Ovary (tissue), 10 donors: ENCODE measurements at regions of chr12 and their contacts with region 1.

Region 1: GRCh38 chr12:63124778-63125177 is 26.2 kb downstream of the AVPR1A start:
- DNase-seq: no peak
- H3K4me3 ChIP-seq: no peak overlapping the region
- H3K27ac ChIP-seq: no peak overlapping the region
- H3K4me1 ChIP-seq: no peaks in the 10 kb centered on the region
- H3K27me3 ChIP-seq: no peaks in the 10 kb centered on the region
- CTCF ChIP-seq: no peak
- EP300 ChIP-seq: no peak
- POLR2A ChIP-seq: no peak

Region 2: GRCh38 chr12:62772416-62772955 is 352.3 kb before region 1 on chr12:
- intact Hi-C with region 1: no loop called
- DNase-seq: no peak
- H3K4me3 ChIP-seq: no peak overlapping the region
- H3K27ac ChIP-seq: no peak overlapping the region
- H3K4me1 ChIP-seq: peaks cover 4% of the 10 kb centered on the region
- H3K27me3 ChIP-seq: no peaks in the 10 kb centered on the region
- CTCF ChIP-seq: no peak
- EP300 ChIP-seq: no peak
- POLR2A ChIP-seq: no peak

Region 3: DNA sequence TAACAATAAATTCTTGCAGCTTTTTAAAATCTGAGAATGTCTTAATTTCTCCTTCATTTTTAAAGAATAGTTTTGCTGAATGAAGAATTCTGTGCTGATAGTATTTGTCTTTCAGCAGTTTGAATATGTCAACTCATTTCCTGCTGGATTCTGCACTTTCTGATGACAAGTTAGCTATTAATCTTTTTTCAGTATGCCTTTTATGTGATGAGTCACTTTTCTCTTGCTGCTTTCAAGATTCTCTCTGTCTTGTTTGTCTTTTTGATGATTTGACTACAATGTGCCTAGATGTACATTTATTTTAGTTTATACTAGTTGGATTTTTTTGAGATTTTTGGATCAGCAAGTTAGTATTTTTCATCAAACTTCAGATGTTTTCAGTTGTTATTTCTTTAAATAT is 114.1 kb after region 1 on chr12:
- intact Hi-C with region 1: no loop called
- DNase-seq: no peak
- H3K4me3 ChIP-seq: no peak overlapping the region
- H3K27ac ChIP-seq: no peak overlapping the region
- H3K4me1 ChIP-seq: no peaks in the 10 kb centered on the region
- H3K27me3 ChIP-seq: no peaks in the 10 kb centered on the region
- CTCF ChIP-seq: no peak
- EP300 ChIP-seq: no peak
- POLR2A ChIP-seq: no peak

Region 4: GRCh38 chr12:64912516-64913255 is 1787.9 kb after region 1 on chr12:
- intact Hi-C with region 1: loop called in 1 of 4 experiments (anchors 5 kb)
- DNase-seq: peak in 4 of 5 donors; percentile 23 to 51 (median 38)
- H3K4me3 ChIP-seq: no peak overlapping the region
- H3K27ac ChIP-seq: no peak overlapping the region
- H3K4me1 ChIP-seq: peaks cover 2% of the 10 kb centered on the region
- H3K27me3 ChIP-seq: no peaks in the 10 kb centered on the region
- CTCF ChIP-seq: no peak
- EP300 ChIP-seq: no peak
- POLR2A ChIP-seq: no peak